HCT116 (cell line): ENCODE measurements at regions of chr3 and their contacts with region 1.

Region 1: GRCh38 chr3:126522363-126522788 is 1.6 kb upstream of the CHST13 start:
- DNase-seq: peak; percentile 28
- ATAC-seq: peak; percentile 66
- H3K4me3 ChIP-seq: no peak overlapping the region
- H3K27ac ChIP-seq: no peak overlapping the region
- H3K4me1 ChIP-seq: peaks cover 4 to 13% of the 10 kb centered on the region in 2 experiments; a peak in 2 of 4 replicates
- H3K27me3 ChIP-seq: no peaks in the 10 kb centered on the region
- CTCF ChIP-seq: peak; percentile 72 to 91 (median 84)
- POLR2A ChIP-seq: no peak
- RAD21 ChIP-seq: peak; percentile 81

Region 2: DNA sequence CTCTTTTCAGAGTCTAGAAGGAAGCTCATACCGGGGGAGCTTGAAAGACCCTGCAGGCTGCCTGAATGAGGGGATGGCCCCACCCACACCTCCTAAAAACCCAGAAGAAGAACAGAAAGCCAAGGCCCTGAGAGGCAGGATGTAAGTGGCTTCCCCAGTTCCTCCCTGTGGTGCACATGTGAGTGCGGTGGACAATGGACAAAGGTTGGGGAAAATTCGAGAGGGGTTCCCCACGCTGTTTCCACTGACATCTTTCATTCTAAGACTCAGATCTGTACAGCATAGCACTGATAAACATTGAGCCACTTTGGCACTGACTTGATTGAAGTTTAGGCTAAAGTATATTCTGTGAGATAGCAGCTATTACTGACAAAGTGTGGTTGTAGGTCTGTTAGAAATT is 1871.6 kb before region 1 on chr3:
- CTCF ChIA-PET with region 1: no interaction called
- POLR2A ChIA-PET with region 1: no interaction called
- RAD21 ChIA-PET with region 1: no interaction called
- intact Hi-C with region 1: no loop called
- DNase-seq: no peak
- ATAC-seq: no peak
- H3K4me3 ChIP-seq: no peak overlapping the region
- H3K27ac ChIP-seq: no peak overlapping the region
- H3K4me1 ChIP-seq: no peaks in the 10 kb centered on the region
- H3K27me3 ChIP-seq: no peaks in the 10 kb centered on the region
- CTCF ChIP-seq: no peak
- POLR2A ChIP-seq: no peak
- RAD21 ChIP-seq: no peak

Region 3: DNA sequence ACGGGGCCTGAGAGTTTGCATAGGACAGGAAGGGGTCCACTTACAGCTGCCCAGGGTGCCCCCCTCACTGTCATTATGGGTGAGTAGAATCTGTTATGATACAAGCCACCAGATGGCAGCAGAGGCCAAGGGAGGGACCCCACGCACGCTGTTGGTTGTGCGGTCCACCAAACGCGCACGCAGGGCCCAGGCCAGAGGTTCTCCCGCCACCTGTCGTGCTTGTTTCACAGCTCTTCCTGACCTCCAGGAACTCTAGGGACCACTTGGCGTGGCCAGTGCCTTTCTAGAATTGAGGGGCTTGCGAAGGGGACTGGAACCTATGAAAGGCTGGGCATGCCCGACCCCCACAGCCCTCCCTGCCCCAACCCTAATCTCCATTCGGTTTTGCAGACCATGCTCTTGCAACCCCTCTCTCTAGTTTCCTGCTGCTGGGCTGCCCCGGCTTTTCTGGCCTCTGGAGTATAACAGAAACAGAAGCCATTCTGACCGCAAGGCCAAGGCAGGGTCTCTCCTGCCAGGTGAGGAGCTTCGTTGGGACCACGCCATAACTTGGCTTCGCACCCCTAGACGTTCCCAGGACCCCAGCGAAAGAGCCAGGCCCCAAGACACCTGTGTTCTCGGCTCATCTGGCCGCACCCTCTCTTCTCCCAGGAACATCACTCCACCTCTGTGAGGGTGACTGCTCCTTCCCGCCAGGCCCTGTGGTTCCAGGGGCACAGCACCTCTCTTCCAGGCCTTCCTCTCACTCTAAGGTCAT is 388.0 kb before region 1 on chr3:
- CTCF ChIA-PET with region 1: no interaction called
- POLR2A ChIA-PET with region 1: no interaction called
- RAD21 ChIA-PET with region 1: no interaction called
- intact Hi-C with region 1: loop called (anchors 5 kb)
- DNase-seq: peak; percentile 39
- ATAC-seq: peak; percentile 95
- H3K4me3 ChIP-seq: no peak overlapping the region
- H3K27ac ChIP-seq: no peak overlapping the region
- H3K4me1 ChIP-seq: peaks cover 0 to under 1% of the 10 kb centered on the region in 2 experiments; a peak in 1 of 4 replicates
- H3K27me3 ChIP-seq: peaks cover 9% of the 10 kb centered on the region; the same call in 1 of the 2 replicates
- CTCF ChIP-seq: peak; percentile 68 to 92 (median 79)
- POLR2A ChIP-seq: no peak
- RAD21 ChIP-seq: peak; percentile 96

Region 4: GRCh38 chr3:126659945-126660886 is 137.8 kb after region 1 on chr3:
- CTCF ChIA-PET with region 1: no interaction called
- POLR2A ChIA-PET with region 1: no interaction called
- RAD21 ChIA-PET with region 1: no interaction called
- intact Hi-C with region 1: loop called (anchors 10 kb)
- DNase-seq: no peak
- ATAC-seq: peak; percentile 48; the same call in 1 of the 2 replicates
- H3K4me3 ChIP-seq: no peak overlapping the region
- H3K27ac ChIP-seq: no peak overlapping the region
- H3K4me1 ChIP-seq: peaks cover 0 to 4% of the 10 kb centered on the region in 2 experiments; a peak in 3 of 4 replicates
- H3K27me3 ChIP-seq: no peaks in the 10 kb centered on the region
- CTCF ChIP-seq: peak in 2 of 3 experiments; percentile 27 to 34; a peak in 4 of 6 replicates
- POLR2A ChIP-seq: no peak
- RAD21 ChIP-seq: no peak